ENCODE measurements at regions of chr17 and their contacts with region 1.

Region 1: GRCh38 chr17:28951991-28952975 is 965 bp upstream of the PHF12 start:
- DNase-seq: peak; percentile 90 to 99 (median 96)
- ATAC-seq: peak; percentile 73 to 78 (median 75)
- H3K4me3 ChIP-seq: peak overlapping the region; percentile 58 to 90
- H3K4me3 Mint-ChIP-seq: no peak overlapping the region
- H3K27ac ChIP-seq: peak overlapping the region; percentile 99
- H3K27ac Mint-ChIP-seq: no peak overlapping the region
- H3K4me1 ChIP-seq: peaks cover 19 to 34% of the 10 kb centered on the region in 2 experiments
- H3K4me1 Mint-ChIP-seq: peaks cover 15 to 18% (median 17%) of the 10 kb centered on the region in 3 donors
- H3K27me3 ChIP-seq: peaks cover 0 to 1% of the 10 kb centered on the region in 2 experiments
- H3K27me3 Mint-ChIP-seq: no peaks in the 10 kb centered on the region

Region 2: GRCh38 chr17:28720247-28720996 is 231.9 kb before region 1 on chr17:
- CTCF ChIA-PET with region 1: interaction called in 1 of 2 experiments, 16 read pairs
- POLR2A ChIA-PET with region 1: interaction called, 6 to 12 read pairs
- DNase-seq: peak in 2 of 35 experiments; percentile 23 to 54
- ATAC-seq: no peak
- H3K4me3 ChIP-seq: peak overlapping the region; percentile 77 to 86
- H3K4me3 Mint-ChIP-seq: peak overlapping the region; percentile 97 to 99 (median 98)
- H3K27ac ChIP-seq: peak overlapping the region; percentile 75
- H3K27ac Mint-ChIP-seq: peak overlapping the region; percentile 97 to 98
- H3K4me1 ChIP-seq: peaks cover 21 to 64% of the 10 kb centered on the region in 2 experiments
- H3K4me1 Mint-ChIP-seq: peaks cover 61 to 64% (median 62%) of the 10 kb centered on the region in 3 donors
- H3K27me3 ChIP-seq: peaks cover 0 to 29% of the 10 kb centered on the region in 2 experiments
- H3K27me3 Mint-ChIP-seq: peaks cover 3 to 23% of the 10 kb centered on the region in 2 donors

Region 3: DNA sequence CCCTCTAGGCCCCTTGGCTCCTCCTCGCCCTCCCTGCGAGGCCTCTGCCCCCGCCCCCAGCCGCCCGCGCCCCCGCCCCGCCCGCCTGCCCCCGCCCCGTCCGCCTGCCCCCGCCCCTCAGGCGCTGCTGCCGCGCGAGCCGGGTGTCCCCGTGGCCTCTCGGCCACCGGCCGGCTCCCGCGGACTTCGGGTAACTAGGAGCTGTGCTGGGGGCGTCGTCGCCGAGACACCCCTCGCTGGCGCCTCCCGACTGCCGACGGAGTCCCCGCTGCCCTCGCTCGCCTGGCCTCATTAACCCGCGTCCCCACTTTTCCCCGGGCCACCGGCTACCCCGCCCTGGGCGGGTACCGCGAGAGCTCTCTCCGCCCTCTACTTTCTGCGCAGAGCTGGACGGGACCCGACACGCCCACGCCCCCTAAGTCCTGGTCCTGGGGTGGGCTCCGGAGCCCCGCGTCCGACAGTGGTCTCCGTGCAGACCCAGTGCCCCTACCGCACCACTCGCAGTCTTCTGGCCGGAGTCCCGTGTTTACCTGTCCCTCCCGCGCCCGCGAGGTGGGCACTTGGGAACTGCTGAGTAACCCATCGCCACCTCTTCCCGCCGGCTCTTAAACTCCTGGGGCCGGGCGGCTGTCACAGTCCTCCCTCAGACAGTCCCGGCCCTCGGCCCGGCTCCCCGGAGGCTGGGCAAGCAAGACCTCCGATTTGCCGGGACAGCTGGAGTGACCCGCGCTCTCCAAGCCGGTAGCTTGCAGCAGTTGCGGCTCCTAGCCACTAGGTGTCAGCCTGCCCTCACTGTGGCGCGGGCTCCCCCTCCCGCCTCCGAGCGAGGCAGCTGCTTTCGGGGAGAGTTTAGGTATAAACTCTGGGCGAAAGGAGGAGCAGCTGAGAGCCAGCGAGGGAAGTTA is 225.8 kb before region 1 on chr17 and contains the start of gene TLCD1:
- CTCF ChIA-PET with region 1: interaction called in 1 of 2 experiments, 25 read pairs
- POLR2A ChIA-PET with region 1: interaction called in 1 of 2 experiments, 5 read pairs
- DNase-seq: peak; percentile 74 to 94 (median 86)
- ATAC-seq: peak; percentile 37 to 61 (median 53)
- H3K4me3 ChIP-seq: peak within 1 kb of the TSS; percentile 86 to 87
- H3K4me3 Mint-ChIP-seq: peak within 1 kb of the TSS; percentile 93 to 100 (median 95)
- H3K27ac ChIP-seq: peak within 1 kb of the TSS; percentile 100
- H3K27ac Mint-ChIP-seq: peak within 1 kb of the TSS; percentile 96 to 99
- H3K4me1 ChIP-seq: peaks cover 16 to 58% of the 10 kb centered on the region in 2 experiments
- H3K4me1 Mint-ChIP-seq: peaks cover 51 to 62% (median 59%) of the 10 kb centered on the region in 3 donors
- H3K27me3 ChIP-seq: no peaks in the 10 kb centered on the region
- H3K27me3 Mint-ChIP-seq: no peaks in the 10 kb centered on the region
- total RNA-seq, gene TLCD1: 1.2 to 1.8 (median 1.3) TPM in 4 of 5 donors, not detected in the other

Region 4: GRCh38 chr17:28885363-28885762 is 66.9 kb before region 1 on chr17:
- CTCF ChIA-PET with region 1: no interaction called
- POLR2A ChIA-PET with region 1: no interaction called
- DNase-seq: no peak
- ATAC-seq: no peak
- H3K4me3 ChIP-seq: no peak overlapping the region
- H3K4me3 Mint-ChIP-seq: no peak overlapping the region
- H3K27ac ChIP-seq: no peak overlapping the region
- H3K27ac Mint-ChIP-seq: no peak overlapping the region
- H3K4me1 ChIP-seq: peaks cover 0 to 15% of the 10 kb centered on the region in 2 experiments
- H3K4me1 Mint-ChIP-seq: peaks cover 16 to 30% (median 20%) of the 10 kb centered on the region in 3 donors
- H3K27me3 ChIP-seq: no peaks in the 10 kb centered on the region
- H3K27me3 Mint-ChIP-seq: no peaks in the 10 kb centered on the region

Region 5: GRCh38 chr17:28902819-28903545 is 49.3 kb before region 1 on chr17 and contains the start of gene DHRS13:
- CTCF ChIA-PET with region 1: interaction called in 1 of 2 experiments, 10 read pairs
- POLR2A ChIA-PET with region 1: interaction called in 1 of 2 experiments, 4 read pairs
- DNase-seq: peak; percentile 88 to 99 (median 93)
- ATAC-seq: peak; percentile 86 to 93 (median 89)
- H3K4me3 ChIP-seq: peak within 1 kb of the TSS; percentile 55 to 76
- H3K4me3 Mint-ChIP-seq: peak within 1 kb of the TSS; percentile 88 to 94 (median 89)
- H3K27ac ChIP-seq: peak within 1 kb of the TSS; percentile 62
- H3K27ac Mint-ChIP-seq: peak within 1 kb of the TSS; percentile 92 to 93
- H3K4me1 ChIP-seq: peaks cover 7 to 34% of the 10 kb centered on the region in 2 experiments
- H3K4me1 Mint-ChIP-seq: peaks cover 38 to 42% (median 42%) of the 10 kb centered on the region in 3 donors
- H3K27me3 ChIP-seq: no peaks in the 10 kb centered on the region
- H3K27me3 Mint-ChIP-seq: no peaks in the 10 kb centered on the region
- total RNA-seq, gene DHRS13: 23.1 to 44.9 (median 39.7) TPM

Region 6: GRCh38 chr17:28925912-28926365 is 26.3 kb before region 1 on chr17:
- CTCF ChIA-PET with region 1: interaction called in 1 of 2 experiments, 9 read pairs
- POLR2A ChIA-PET with region 1: interaction called, 16 to 20 read pairs
- DNase-seq: peak in 34 of 35 experiments; percentile 16 to 92 (median 62)
- ATAC-seq: peak; percentile 88 to 96 (median 93)
- H3K4me3 ChIP-seq: peak overlapping the region in 1 of 2 donors; percentile 11
- H3K4me3 Mint-ChIP-seq: peak overlapping the region; percentile 21 to 57 (median 45)
- H3K27ac ChIP-seq: peak overlapping the region; percentile 98
- H3K27ac Mint-ChIP-seq: peak overlapping the region; percentile 91 to 96
- H3K4me1 ChIP-seq: peaks cover 20 to 51% of the 10 kb centered on the region in 2 experiments
- H3K4me1 Mint-ChIP-seq: peaks cover 57 to 74% (median 70%) of the 10 kb centered on the region in 3 donors
- H3K27me3 ChIP-seq: no peaks in the 10 kb centered on the region
- H3K27me3 Mint-ChIP-seq: no peaks in the 10 kb centered on the region

Measured in T-cell (primary cell).